Endothelial cell of umbilical vein (primary cell): ENCODE measurements at regions of chr4 and their contacts with region 1.

Region 1: GRCh38 chr4:17336524-17336961 is 175.3 kb downstream of the QDPR start:
- DNase-seq: peak; percentile 97
- H3K4me3 ChIP-seq: no peak overlapping the region
- H3K27ac ChIP-seq: peak overlapping the region; percentile 81
- H3K4me1 ChIP-seq: peaks cover 22% of the 10 kb centered on the region
- H3K27me3 ChIP-seq: no peaks in the 10 kb centered on the region
- CTCF ChIP-seq: no peak
- POLR2A ChIP-seq: peak; percentile 29

Region 2: GRCh38 chr4:16772366-16772850 is 564.1 kb before region 1 on chr4:
- CTCF ChIA-PET with region 1: no interaction called
- POLR2A ChIA-PET with region 1: no interaction called
- dilution Hi-C with region 1: no loop called
- intact Hi-C with region 1: loop called (anchors 1 kb)
- DNase-seq: peak; percentile 77
- H3K4me3 ChIP-seq: no peak overlapping the region
- H3K27ac ChIP-seq: peak overlapping the region; percentile 81
- H3K4me1 ChIP-seq: peaks cover 21% of the 10 kb centered on the region
- H3K27me3 ChIP-seq: no peaks in the 10 kb centered on the region
- CTCF ChIP-seq: no peak
- POLR2A ChIP-seq: no peak

Region 3: DNA sequence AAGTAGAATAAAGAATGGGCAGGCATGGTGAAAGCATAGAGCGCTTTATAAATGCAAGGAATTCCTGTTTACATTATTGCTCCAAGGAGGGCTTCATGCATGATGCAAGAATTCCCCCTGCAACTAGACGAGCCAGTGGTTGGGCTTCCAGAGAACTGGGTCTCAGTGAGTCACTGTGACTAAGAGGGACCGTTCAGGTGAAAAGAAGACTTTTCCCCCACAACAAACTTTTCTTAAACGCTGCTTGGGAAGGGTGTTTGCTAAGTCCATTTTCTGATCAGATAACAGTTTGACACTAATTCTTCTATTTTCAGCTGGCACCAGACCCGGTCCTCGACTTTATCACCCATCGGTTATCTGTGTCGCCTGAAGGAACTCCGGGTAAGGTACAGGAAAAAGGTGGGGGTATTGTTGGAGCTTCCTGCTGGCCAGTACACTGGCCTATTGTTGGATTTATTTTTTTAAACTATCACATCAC is 478.2 kb before region 1 on chr4:
- CTCF ChIA-PET with region 1: no interaction called
- POLR2A ChIA-PET with region 1: no interaction called
- dilution Hi-C with region 1: no loop called
- intact Hi-C with region 1: loop called (anchors 2 kb)
- DNase-seq: peak; percentile 98
- H3K4me3 ChIP-seq: peak overlapping the region in 1 of 3 experiments; percentile 18
- H3K27ac ChIP-seq: peak overlapping the region; percentile 79
- H3K4me1 ChIP-seq: peaks cover 64% of the 10 kb centered on the region
- H3K27me3 ChIP-seq: no peaks in the 10 kb centered on the region
- CTCF ChIP-seq: no peak
- POLR2A ChIP-seq: peak; percentile 65

Region 4: DNA sequence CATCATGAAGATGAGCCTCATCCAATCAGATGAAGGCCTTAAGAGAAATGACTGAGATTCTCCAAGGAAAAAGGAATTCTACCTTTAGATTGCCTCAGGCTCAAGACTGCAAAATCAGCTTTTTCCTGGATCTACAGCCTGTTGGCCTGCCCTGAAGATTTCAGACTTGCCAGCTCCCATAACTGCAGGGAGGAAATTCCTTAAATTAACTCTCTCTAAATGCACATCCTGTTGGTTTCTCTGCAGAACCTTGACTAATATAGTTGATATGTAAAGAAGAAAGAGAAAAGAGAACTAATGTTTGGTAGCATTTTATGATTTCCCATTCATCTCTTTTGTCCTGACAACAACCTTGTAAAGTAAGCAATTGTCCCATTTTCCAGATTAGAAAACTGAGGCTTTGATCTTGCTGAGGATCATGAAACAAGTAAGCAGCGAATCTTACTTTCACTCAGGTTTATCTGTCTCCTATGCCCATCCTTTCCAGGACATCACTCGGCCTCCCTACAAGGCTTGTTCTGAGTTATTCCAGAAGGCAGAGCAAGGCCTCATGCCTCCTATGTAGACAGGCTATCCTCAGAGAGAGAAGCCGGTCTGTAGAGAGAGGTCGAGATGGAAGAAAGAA is 323.0 kb before region 1 on chr4:
- CTCF ChIA-PET with region 1: no interaction called
- POLR2A ChIA-PET with region 1: no interaction called
- dilution Hi-C with region 1: no loop called
- intact Hi-C with region 1: loop called (anchors 1 kb)
- DNase-seq: peak; percentile 80
- H3K4me3 ChIP-seq: no peak overlapping the region
- H3K27ac ChIP-seq: no peak overlapping the region
- H3K4me1 ChIP-seq: peaks cover 24% of the 10 kb centered on the region
- H3K27me3 ChIP-seq: no peaks in the 10 kb centered on the region
- CTCF ChIP-seq: no peak
- POLR2A ChIP-seq: no peak

Region 5: GRCh38 chr4:17309567-17310268 is 26.8 kb before region 1 on chr4:
- CTCF ChIA-PET with region 1: no interaction called
- POLR2A ChIA-PET with region 1: no interaction called
- dilution Hi-C with region 1: no loop called
- intact Hi-C with region 1: no loop called
- DNase-seq: peak; percentile 13
- H3K4me3 ChIP-seq: no peak overlapping the region
- H3K27ac ChIP-seq: no peak overlapping the region
- H3K4me1 ChIP-seq: peaks cover 5% of the 10 kb centered on the region
- H3K27me3 ChIP-seq: no peaks in the 10 kb centered on the region
- CTCF ChIP-seq: no peak
- POLR2A ChIP-seq: no peak

Region 6: DNA sequence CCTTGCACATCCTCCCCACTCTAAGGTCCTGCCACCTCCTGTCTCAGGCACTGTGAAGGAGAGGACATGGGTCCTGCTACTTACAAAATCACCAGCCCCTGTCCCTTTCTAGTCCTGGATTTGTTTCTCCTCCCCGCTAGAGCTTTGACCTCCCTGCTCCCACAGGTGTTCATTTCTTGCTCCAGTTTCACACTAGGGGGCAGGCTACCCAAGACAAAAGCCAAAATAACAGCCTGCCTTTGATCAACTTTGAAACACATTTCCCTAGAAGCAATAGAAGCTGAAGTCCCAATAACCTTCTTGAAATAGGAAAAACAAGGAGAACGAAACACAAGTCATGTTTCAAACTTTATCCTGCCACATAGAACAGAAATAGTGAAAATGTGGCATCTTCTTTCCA is 10.9 kb after region 1 on chr4:
- CTCF ChIA-PET with region 1: interaction called, 17 read pairs
- POLR2A ChIA-PET with region 1: no interaction called
- dilution Hi-C with region 1: no loop called
- intact Hi-C with region 1: no loop called
- DNase-seq: peak; percentile 40
- H3K4me3 ChIP-seq: no peak overlapping the region
- H3K27ac ChIP-seq: no peak overlapping the region
- H3K4me1 ChIP-seq: no peaks in the 10 kb centered on the region
- H3K27me3 ChIP-seq: no peaks in the 10 kb centered on the region
- CTCF ChIP-seq: peak; percentile 44 to 57
- POLR2A ChIP-seq: no peak

Region 7: GRCh38 chr4:17397611-17398010 is 61.1 kb after region 1 on chr4:
- CTCF ChIA-PET with region 1: no interaction called
- POLR2A ChIA-PET with region 1: no interaction called
- dilution Hi-C with region 1: no loop called
- intact Hi-C with region 1: no loop called
- DNase-seq: no peak
- H3K4me3 ChIP-seq: no peak overlapping the region
- H3K27ac ChIP-seq: no peak overlapping the region
- H3K4me1 ChIP-seq: no peaks in the 10 kb centered on the region
- H3K27me3 ChIP-seq: no peaks in the 10 kb centered on the region
- CTCF ChIP-seq: no peak
- POLR2A ChIP-seq: no peak

Region 8: DNA sequence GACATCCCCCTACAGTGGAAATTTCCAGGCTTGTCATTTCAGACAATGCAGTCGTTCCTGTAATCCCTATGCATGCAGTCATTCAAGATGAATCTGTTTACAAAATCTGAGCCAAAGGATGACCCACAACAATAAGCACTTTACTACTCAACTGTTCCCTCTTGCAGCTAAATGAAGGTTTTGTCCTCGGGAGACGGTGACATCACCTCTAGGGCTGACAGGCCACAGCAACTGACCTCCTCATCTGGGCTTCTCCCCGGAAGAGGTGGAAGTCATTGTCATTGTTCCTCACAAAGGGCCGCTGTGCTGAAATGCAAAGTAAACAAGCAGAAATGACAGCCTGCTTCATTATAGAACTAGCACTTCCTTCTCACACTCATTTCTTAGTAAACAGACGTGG is 207.7 kb after region 1 on chr4:
- CTCF ChIA-PET with region 1: no interaction called
- POLR2A ChIA-PET with region 1: no interaction called
- dilution Hi-C with region 1: no loop called
- intact Hi-C with region 1: no loop called
- DNase-seq: no peak
- H3K4me3 ChIP-seq: no peak overlapping the region
- H3K27ac ChIP-seq: no peak overlapping the region
- H3K4me1 ChIP-seq: peaks cover 4% of the 10 kb centered on the region
- H3K27me3 ChIP-seq: peaks cover 2 to 3% of the 10 kb centered on the region in 2 experiments
- CTCF ChIP-seq: no peak
- POLR2A ChIP-seq: no peak